ENCODE measurements at regions of chr2 and their contacts with region 1.

Region 1: DNA sequence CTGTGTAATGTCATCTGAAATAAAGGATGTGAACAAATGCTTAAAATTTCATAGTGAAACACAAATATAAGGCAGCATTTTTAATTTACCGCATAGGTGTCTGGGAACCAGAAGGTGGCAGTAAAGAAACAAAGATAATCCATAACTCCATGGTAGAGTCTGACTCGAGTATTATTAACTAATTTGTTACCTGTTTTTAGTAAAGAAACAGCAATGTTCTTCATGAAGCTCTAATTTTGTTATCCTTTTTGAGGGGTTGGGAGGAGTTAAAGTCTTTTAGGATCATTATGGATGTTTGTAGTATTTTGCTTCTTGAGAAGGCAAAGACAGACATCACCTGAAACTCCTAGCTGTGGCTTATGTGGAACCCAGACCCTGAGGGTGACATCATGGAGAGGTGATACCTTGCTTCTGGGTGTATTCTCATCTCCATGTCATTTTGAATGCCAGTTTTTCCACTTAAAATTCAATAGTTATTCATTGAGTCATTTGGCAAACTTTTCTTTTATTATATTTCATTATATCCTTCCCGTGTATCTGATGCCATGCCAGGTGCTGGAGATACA is 286.2 kb upstream of the EPAS1 start:
- DNase-seq: no peak
- ATAC-seq: peak; percentile 51
- H3K4me3 ChIP-seq: no peak overlapping the region
- H3K4me1 ChIP-seq: no peaks in the 10 kb centered on the region
- CTCF ChIP-seq: no peak

Region 2: DNA sequence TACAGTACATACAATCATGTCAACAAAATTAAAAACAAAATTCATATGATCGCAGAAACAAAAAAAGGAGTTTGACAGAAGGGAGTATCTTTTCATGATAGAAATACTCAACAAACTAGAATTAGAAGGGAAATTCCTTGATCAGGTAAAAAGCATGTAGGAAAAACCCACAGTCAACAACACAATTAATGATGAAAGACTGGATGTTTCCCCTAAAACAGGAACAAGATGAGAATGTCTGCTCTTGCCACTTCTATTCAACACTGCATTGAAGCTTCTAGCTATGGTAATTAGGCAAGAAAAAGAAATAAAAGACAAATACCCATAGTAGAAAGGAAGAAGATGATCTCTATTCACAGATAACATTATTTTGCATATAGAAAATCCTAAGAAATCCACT is 487.0 kb before region 1 on chr2:
- intact Hi-C with region 1: no loop called
- DNase-seq: no peak
- ATAC-seq: no peak
- H3K4me3 ChIP-seq: no peak overlapping the region
- H3K4me1 ChIP-seq: no peaks in the 10 kb centered on the region
- CTCF ChIP-seq: no peak

Region 3: DNA sequence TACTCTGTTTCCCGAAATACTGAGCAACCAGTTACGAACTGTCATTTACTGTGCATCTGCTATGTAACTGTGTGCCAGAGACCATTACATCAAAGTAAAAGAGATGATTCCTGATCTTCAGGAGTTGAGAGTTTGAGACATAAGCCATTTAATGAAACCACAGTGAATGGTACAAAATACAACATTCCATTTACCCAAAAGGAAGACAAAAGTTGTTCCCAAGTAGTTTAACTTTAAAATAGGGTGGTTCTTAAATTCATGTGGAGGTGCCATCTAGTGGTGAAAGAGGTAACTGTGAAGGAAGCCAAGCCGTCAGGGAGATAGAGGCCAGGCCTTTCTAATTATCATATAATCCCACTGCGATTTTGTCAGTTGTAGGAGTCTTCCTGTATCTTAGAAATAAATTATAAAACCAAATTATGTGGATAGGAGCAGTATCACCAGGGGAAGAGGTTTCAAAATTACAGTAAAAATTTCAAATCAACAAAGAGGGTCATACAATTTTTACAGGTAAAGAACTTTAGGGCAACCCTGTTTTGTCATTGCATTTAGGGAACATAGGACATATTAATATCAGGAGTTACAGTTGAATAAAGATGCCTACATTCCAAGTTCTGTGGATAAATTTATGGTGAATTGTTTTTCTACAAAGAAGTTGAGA is 353.9 kb after region 1 on chr2:
- intact Hi-C with region 1: loop called in 1 of 2 experiments (anchors 10 kb)
- DNase-seq: peak in 1 of 3 donors; percentile 78
- ATAC-seq: peak; percentile 71
- H3K4me3 ChIP-seq: no peak overlapping the region
- H3K4me1 ChIP-seq: no peaks in the 10 kb centered on the region
- CTCF ChIP-seq: peak; percentile 48